Calu3 (cell line): ENCODE measurements at regions of chr17 and their contacts with region 1.

Region 1: GRCh38 chr17:60036796-60037612 is 41.7 kb downstream of the HEATR6 start:
- DNase-seq: peak; percentile 69
- H3K4me3 Mint-ChIP-seq: no peak overlapping the region
- H3K27ac Mint-ChIP-seq: no peak overlapping the region
- H3K4me1 Mint-ChIP-seq: no peaks in the 10 kb centered on the region
- H3K27me3 Mint-ChIP-seq: no peaks in the 10 kb centered on the region
- CTCF ChIP-seq: peak; percentile 68

Region 2: DNA sequence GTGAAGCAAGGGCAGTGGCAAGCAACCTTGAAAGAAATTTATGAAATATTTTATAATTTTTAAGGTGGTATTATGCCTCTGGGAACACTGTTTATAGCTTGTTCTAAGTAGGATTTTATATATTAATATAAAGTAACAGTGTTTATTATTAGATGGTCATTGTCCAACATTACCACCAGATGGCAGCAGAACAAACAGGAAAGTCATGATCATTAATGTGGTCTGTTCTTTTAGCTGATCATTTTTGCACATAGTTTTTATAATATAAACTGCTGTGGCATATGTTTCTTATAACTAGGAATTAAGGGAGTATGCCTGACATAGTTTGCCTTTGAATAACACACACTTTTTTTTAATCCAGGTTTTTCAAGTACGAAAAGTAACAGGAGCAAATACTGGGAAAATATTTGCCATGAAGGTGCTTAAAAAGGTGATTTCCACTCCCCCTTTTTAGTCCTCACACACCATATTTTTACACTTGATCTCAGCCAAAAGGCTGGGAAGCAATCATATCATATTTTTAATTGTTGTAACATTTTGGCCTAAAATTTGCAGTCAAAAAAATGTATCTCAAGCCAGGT is 122.6 kb before region 1 on chr17:
- CTCF ChIA-PET with region 1: interaction called, 6 read pairs
- intact Hi-C with region 1: loop called (anchors 10 kb)
- DNase-seq: no peak
- H3K4me3 Mint-ChIP-seq: no peak overlapping the region
- H3K27ac Mint-ChIP-seq: no peak overlapping the region
- H3K4me1 Mint-ChIP-seq: no peaks in the 10 kb centered on the region
- H3K27me3 Mint-ChIP-seq: no peaks in the 10 kb centered on the region
- CTCF ChIP-seq: no peak

Region 3: GRCh38 chr17:60127068-60128054 is 90.4 kb after region 1 on chr17:
- CTCF ChIA-PET with region 1: no interaction called
- intact Hi-C with region 1: no loop called
- DNase-seq: no peak
- H3K4me3 Mint-ChIP-seq: no peak overlapping the region
- H3K27ac Mint-ChIP-seq: no peak overlapping the region
- H3K4me1 Mint-ChIP-seq: no peaks in the 10 kb centered on the region
- H3K27me3 Mint-ChIP-seq: peaks cover 19% of the 10 kb centered on the region
- CTCF ChIP-seq: no peak